Caco-2 (cell line): ENCODE measurements at regions of chr10 and their contacts with region 1.

Region 1: GRCh38 chr10:118459726-118460193 is 117.6 kb upstream of the FAM204A start:
- DNase-seq: peak; percentile 71 to 77
- H3K4me3 ChIP-seq: no peak overlapping the region
- H3K4me3 Mint-ChIP-seq: peak overlapping the region; percentile 24
- H3K27ac Mint-ChIP-seq: no peak overlapping the region
- H3K4me1 ChIP-seq: peaks cover 16% of the 10 kb centered on the region
- H3K4me1 Mint-ChIP-seq: no peaks in the 10 kb centered on the region
- H3K27me3 ChIP-seq: no peaks in the 10 kb centered on the region
- H3K27me3 Mint-ChIP-seq: peaks cover 11% of the 10 kb centered on the region
- CTCF ChIP-seq: peak; percentile 76 to 80

Region 2: GRCh38 chr10:118308664-118309063 is 151.1 kb before region 1 on chr10:
- CTCF ChIA-PET with region 1: no interaction called
- POLR2A ChIA-PET with region 1: no interaction called
- intact Hi-C with region 1: loop called (anchors 2 kb)
- DNase-seq: peak in 1 of 2 experiments; percentile 27
- H3K4me3 ChIP-seq: no peak overlapping the region
- H3K4me3 Mint-ChIP-seq: no peak overlapping the region
- H3K27ac Mint-ChIP-seq: no peak overlapping the region
- H3K4me1 ChIP-seq: 0 out of 2 replicates have a peak, but pooled peaks cover 8% of the 10 kb centered on the region
- H3K4me1 Mint-ChIP-seq: no peaks in the 10 kb centered on the region
- H3K27me3 ChIP-seq: no peaks in the 10 kb centered on the region
- H3K27me3 Mint-ChIP-seq: no peaks in the 10 kb centered on the region
- CTCF ChIP-seq: peak in 1 of 2 experiments; percentile 20

Region 3: GRCh38 chr10:118341791-118342637 is 117.7 kb before region 1 on chr10 and contains the start of gene FAM204A:
- CTCF ChIA-PET with region 1: no interaction called
- POLR2A ChIA-PET with region 1: no interaction called
- intact Hi-C with region 1: loop called (anchors 2 kb)
- DNase-seq: peak; percentile 93 to 95
- H3K4me3 ChIP-seq: peak within 1 kb of the TSS; percentile 79
- H3K4me3 Mint-ChIP-seq: peak within 1 kb of the TSS; percentile 84
- H3K27ac Mint-ChIP-seq: peak within 1 kb of the TSS; percentile 93
- H3K4me1 ChIP-seq: 0 out of 2 replicates have a peak, but pooled peaks cover 3% of the 10 kb centered on the region
- H3K4me1 Mint-ChIP-seq: no peaks in the 10 kb centered on the region
- H3K27me3 ChIP-seq: no peaks in the 10 kb centered on the region
- H3K27me3 Mint-ChIP-seq: peaks cover 3% of the 10 kb centered on the region
- CTCF ChIP-seq: no peak
- total RNA-seq, gene FAM204A: 63.7 and 68.7 TPM in 2 replicates

Region 4: GRCh38 chr10:118405928-118406327 is 53.8 kb before region 1 on chr10:
- CTCF ChIA-PET with region 1: no interaction called
- POLR2A ChIA-PET with region 1: no interaction called
- intact Hi-C with region 1: no loop called
- DNase-seq: no peak
- H3K4me3 ChIP-seq: no peak overlapping the region
- H3K4me3 Mint-ChIP-seq: no peak overlapping the region
- H3K27ac Mint-ChIP-seq: no peak overlapping the region
- H3K4me1 ChIP-seq: no peaks in the 10 kb centered on the region
- H3K4me1 Mint-ChIP-seq: no peaks in the 10 kb centered on the region
- H3K27me3 ChIP-seq: no peaks in the 10 kb centered on the region
- H3K27me3 Mint-ChIP-seq: peaks cover 23% of the 10 kb centered on the region
- CTCF ChIP-seq: no peak

Region 5: GRCh38 chr10:118423800-118424479 is 35.8 kb before region 1 on chr10:
- CTCF ChIA-PET with region 1: interaction called, 7 read pairs
- POLR2A ChIA-PET with region 1: no interaction called
- intact Hi-C with region 1: loop called (anchors 1 kb)
- DNase-seq: peak; percentile 91 to 93
- H3K4me3 ChIP-seq: no peak overlapping the region
- H3K4me3 Mint-ChIP-seq: no peak overlapping the region
- H3K27ac Mint-ChIP-seq: no peak overlapping the region
- H3K4me1 ChIP-seq: no peaks in the 10 kb centered on the region
- H3K4me1 Mint-ChIP-seq: peaks cover 7% of the 10 kb centered on the region
- H3K27me3 ChIP-seq: no peaks in the 10 kb centered on the region
- H3K27me3 Mint-ChIP-seq: peaks cover 12% of the 10 kb centered on the region
- CTCF ChIP-seq: peak; percentile 88 to 91

Region 6: GRCh38 chr10:118543714-118544400 is 84.1 kb after region 1 on chr10:
- CTCF ChIA-PET with region 1: interaction called, 4 read pairs
- POLR2A ChIA-PET with region 1: no interaction called
- intact Hi-C with region 1: loop called (anchors 2 kb)
- DNase-seq: peak; percentile 55 to 66
- H3K4me3 ChIP-seq: no peak overlapping the region
- H3K4me3 Mint-ChIP-seq: no peak overlapping the region
- H3K27ac Mint-ChIP-seq: no peak overlapping the region
- H3K4me1 ChIP-seq: no peaks in the 10 kb centered on the region
- H3K4me1 Mint-ChIP-seq: no peaks in the 10 kb centered on the region
- H3K27me3 ChIP-seq: peaks cover 1% of the 10 kb centered on the region; the same call in 1 of the 2 replicates
- H3K27me3 Mint-ChIP-seq: peaks cover 21% of the 10 kb centered on the region
- CTCF ChIP-seq: peak; percentile 62 to 91